ENCODE measurements at regions of chr4 and their contacts with region 1.

Region 1: GRCh38 chr4:83356899-83357661 is 22.4 kb upstream of the HPSE start:
- DNase-seq: no peak
- H3K4me3 Mint-ChIP-seq: peak overlapping the region; percentile 30
- H3K27ac Mint-ChIP-seq: peak overlapping the region; percentile 96
- H3K4me1 Mint-ChIP-seq: peaks cover 15% of the 10 kb centered on the region
- H3K27me3 Mint-ChIP-seq: no peaks in the 10 kb centered on the region

Region 2: GRCh38 chr4:81494031-81494431 is 1863.0 kb before region 1 on chr4:
- intact Hi-C with region 1: loop called (anchors 5 kb)
- DNase-seq: no peak
- H3K4me3 Mint-ChIP-seq: peak overlapping the region; percentile 50
- H3K27ac Mint-ChIP-seq: peak overlapping the region; percentile 25
- H3K4me1 Mint-ChIP-seq: peaks cover 43% of the 10 kb centered on the region
- H3K27me3 Mint-ChIP-seq: peaks cover 10% of the 10 kb centered on the region

Region 3: GRCh38 chr4:82900331-82901128 is 456.6 kb before region 1 on chr4 and contains the start of gene THAP9:
- intact Hi-C with region 1: loop called (anchors 1 kb)
- DNase-seq: peak; percentile 98
- H3K4me3 Mint-ChIP-seq: no peak within 1 kb of the TSS
- H3K27ac Mint-ChIP-seq: no peak within 1 kb of the TSS
- H3K4me1 Mint-ChIP-seq: peaks cover 27% of the 10 kb centered on the region
- H3K27me3 Mint-ChIP-seq: peaks cover 2% of the 10 kb centered on the region
- total RNA-seq, gene THAP9: 1.9 and 2.3 TPM in 2 replicates

Region 4: GRCh38 chr4:83110223-83110945 is 246.7 kb before region 1 on chr4:
- intact Hi-C with region 1: loop called (anchors 1 kb)
- DNase-seq: peak; percentile 86
- H3K4me3 Mint-ChIP-seq: peak overlapping the region; percentile 89
- H3K27ac Mint-ChIP-seq: peak overlapping the region; percentile 93
- H3K4me1 Mint-ChIP-seq: peaks cover 58% of the 10 kb centered on the region
- H3K27me3 Mint-ChIP-seq: no peaks in the 10 kb centered on the region

Region 5: GRCh38 chr4:83276299-83277040 is 80.6 kb before region 1 on chr4:
- intact Hi-C with region 1: loop called (anchors 1 kb)
- DNase-seq: no peak
- H3K4me3 Mint-ChIP-seq: no peak overlapping the region
- H3K27ac Mint-ChIP-seq: peak overlapping the region; percentile 79
- H3K4me1 Mint-ChIP-seq: peaks cover 30% of the 10 kb centered on the region
- H3K27me3 Mint-ChIP-seq: peaks cover 2% of the 10 kb centered on the region

Region 6: GRCh38 chr4:83340692-83341343 is 16.3 kb before region 1 on chr4:
- intact Hi-C with region 1: loop called (anchors 1 kb)
- DNase-seq: peak; percentile 48
- H3K4me3 Mint-ChIP-seq: peak overlapping the region; percentile 23
- H3K27ac Mint-ChIP-seq: peak overlapping the region; percentile 98
- H3K4me1 Mint-ChIP-seq: peaks cover 30% of the 10 kb centered on the region
- H3K27me3 Mint-ChIP-seq: peaks cover 26% of the 10 kb centered on the region

Region 7: DNA sequence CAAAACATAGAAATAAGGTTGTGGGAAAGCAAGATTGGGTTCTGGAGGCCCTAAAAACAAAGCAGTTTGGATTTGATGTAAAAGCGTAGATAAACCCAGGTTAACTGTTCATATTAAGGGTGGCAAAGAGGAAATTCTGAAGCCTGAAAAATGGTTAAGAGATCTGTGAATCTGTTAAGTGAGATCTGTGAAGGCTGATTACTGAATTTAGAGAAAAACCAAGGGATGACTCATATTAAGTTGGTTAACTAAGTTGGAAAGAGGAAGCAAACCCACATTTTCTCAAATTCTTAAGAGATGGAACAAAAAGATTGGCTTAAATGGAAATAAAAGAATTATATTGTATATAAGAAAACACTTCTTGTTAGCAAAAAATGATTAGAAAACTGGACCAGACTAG is 201.6 kb after region 1 on chr4:
- intact Hi-C with region 1: loop called (anchors 5 kb)
- DNase-seq: no peak
- H3K4me3 Mint-ChIP-seq: peak overlapping the region; percentile 29
- H3K27ac Mint-ChIP-seq: peak overlapping the region; percentile 46
- H3K4me1 Mint-ChIP-seq: peaks cover 24% of the 10 kb centered on the region
- H3K27me3 Mint-ChIP-seq: peaks cover 3% of the 10 kb centered on the region

Measured in activated T-helper 1 cell treated with anti-CD3 and anti-CD28 coated beads, Interleukin-12 subunit alpha, Interleukin-12 subunit beta, Interleukin-2, Interleukin-4 antibody, amounts not matched to agents 30 ng/mL and 10 ng/mL and 1 ng/mL, durations not matched to agents 14 hours and 24 hours and 36 hours (primary cell).